Activated naive CD4-positive, alpha-beta T cell treated with anti-CD3 and anti-CD28 coated beads, Interleukin-2, amount 10 ng/mL, durations not matched to agents 7 days and 5 days (primary cell): ENCODE measurements at regions of chr17 and their contacts with region 1.

Region 1: DNA sequence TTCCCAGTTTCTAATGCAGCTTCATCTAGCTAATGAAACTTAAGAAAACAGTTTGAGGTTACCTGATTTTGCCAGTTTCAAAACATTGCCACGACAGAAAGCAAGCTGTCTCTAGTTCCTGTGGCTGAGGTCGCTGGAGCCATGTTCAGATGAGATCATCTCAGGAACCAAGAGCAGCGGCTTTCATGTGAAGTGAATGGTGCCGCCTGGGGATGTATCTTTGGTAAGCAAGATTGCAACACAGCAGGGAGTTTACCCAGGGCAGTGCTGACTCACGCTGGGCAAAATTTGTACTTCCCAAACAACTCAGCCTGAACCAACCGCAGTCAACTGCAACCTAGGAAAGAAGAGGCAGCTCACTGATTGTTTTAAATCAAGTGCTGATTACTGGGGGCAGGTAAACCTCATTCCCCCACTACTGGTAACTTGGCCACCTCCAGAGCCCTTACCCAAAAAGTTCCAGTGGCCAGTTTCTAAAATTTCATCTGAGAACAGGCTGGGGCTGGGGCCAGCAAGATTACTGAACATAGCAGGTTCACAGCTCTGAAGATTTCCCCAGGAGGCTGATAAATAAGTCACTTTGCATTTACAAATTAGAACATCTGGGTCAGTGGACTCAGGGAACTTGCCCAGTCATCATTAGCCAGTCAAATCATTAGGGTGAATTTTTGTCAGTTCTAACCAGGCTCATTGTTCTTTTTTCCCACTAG is at the start of gene RFFL:
- DNase-seq: peak; percentile 91
- H3K4me3 Mint-ChIP-seq: peak within 1 kb of the TSS; percentile 35
- H3K27ac Mint-ChIP-seq: peak within 1 kb of the TSS; percentile 92
- H3K4me1 Mint-ChIP-seq: peaks cover 57% of the 10 kb centered on the region
- H3K27me3 Mint-ChIP-seq: no peaks in the 10 kb centered on the region

Region 2: DNA sequence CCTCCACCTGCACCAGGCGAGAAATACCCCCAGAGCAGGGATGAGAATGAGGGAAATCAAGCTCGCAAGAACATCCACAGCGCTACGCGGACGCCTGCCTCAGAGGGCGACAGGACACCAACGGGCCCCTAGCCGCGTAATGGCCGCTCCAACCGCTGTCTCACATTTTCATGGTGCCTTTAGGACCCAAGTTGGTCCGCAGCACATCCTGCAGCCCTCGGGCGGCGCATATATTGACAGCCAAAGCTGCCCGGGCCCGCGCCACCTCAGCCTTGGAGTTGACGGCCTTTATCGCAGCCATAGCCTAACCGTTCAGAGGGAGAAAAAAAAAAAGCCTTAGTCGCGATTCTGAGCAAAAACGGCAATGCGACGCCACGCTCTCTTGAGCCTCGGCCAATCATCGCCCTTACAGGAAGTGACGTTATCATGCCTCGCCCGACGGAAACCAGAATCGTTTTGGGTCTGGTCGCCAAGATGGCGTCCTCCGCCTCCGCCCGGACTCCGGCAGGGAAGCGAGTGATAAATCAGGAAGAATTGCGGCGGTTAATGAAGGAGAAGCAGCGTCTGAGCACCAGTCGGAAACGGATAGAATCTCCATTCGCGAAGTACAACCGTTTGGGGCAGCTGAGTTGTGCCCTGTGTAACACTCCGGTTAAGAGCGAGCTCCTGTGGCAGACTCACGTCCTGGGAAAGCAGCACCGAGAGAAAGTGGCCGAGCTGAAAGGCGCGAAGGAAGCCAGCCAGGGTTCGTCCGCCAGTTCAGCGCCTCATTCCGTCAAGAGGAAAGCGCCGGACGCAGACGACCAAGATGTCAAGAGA is 102.4 kb before region 1 on chr17 and contains the starts of genes CCT6B and ZNF830:
- CTCF ChIA-PET with region 1: no interaction called
- DNase-seq: peak; percentile 96
- H3K4me3 Mint-ChIP-seq: peak within 1 kb of the TSS; percentile 100
- H3K27ac Mint-ChIP-seq: peak within 1 kb of the TSS; percentile 99
- H3K4me1 Mint-ChIP-seq: peaks cover 28% of the 10 kb centered on the region
- H3K27me3 Mint-ChIP-seq: peaks cover 13% of the 10 kb centered on the region

Region 3: GRCh38 chr17:34974179-34974578 is 89.5 kb before region 1 on chr17:
- CTCF ChIA-PET with region 1: no interaction called
- DNase-seq: no peak
- H3K4me3 Mint-ChIP-seq: no peak overlapping the region
- H3K27ac Mint-ChIP-seq: no peak overlapping the region
- H3K4me1 Mint-ChIP-seq: peaks cover 2% of the 10 kb centered on the region
- H3K27me3 Mint-ChIP-seq: peaks cover 4% of the 10 kb centered on the region

Region 4: DNA sequence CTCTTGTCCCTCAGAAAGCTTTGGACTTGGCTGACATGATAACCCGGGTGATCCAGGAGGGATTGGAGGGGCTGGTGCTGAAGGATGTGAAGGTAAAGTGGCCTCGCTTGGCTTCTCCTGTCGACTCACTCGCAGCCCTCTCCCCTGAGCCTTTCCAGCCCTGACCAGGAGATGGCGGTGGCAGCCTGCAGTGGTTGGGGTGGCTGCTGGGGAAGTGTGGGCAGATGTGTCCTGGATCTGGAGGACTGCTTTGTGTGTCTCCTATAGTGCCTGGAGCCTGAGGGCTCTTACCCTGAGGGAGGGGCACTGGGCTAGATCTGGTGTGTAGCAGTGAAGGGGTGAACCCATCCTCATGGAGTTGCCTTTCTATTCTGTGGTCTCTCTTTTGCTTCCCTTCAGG is 65.5 kb before region 1 on chr17:
- CTCF ChIA-PET with region 1: interaction called, 20 read pairs
- DNase-seq: peak; percentile 88
- H3K4me3 Mint-ChIP-seq: no peak overlapping the region
- H3K27ac Mint-ChIP-seq: peak overlapping the region; percentile 33
- H3K4me1 Mint-ChIP-seq: peaks cover 5% of the 10 kb centered on the region
- H3K27me3 Mint-ChIP-seq: no peaks in the 10 kb centered on the region

Region 5: GRCh38 chr17:35022536-35023063 is 41.1 kb before region 1 on chr17:
- CTCF ChIA-PET with region 1: interaction called, 20 read pairs
- DNase-seq: peak; percentile 81
- H3K4me3 Mint-ChIP-seq: peak overlapping the region; percentile 53
- H3K27ac Mint-ChIP-seq: peak overlapping the region; percentile 96
- H3K4me1 Mint-ChIP-seq: peaks cover 42% of the 10 kb centered on the region
- H3K27me3 Mint-ChIP-seq: no peaks in the 10 kb centered on the region